ENCODE measurements at regions of chr3 and their contacts with region 1.

Region 1: GRCh38 chr3:149969940-149970715 is 567 bp downstream of the PFN2 start:
- DNase-seq: peak; percentile 86
- ATAC-seq: peak; percentile 65
- H3K4me3 Mint-ChIP-seq: peak overlapping the region; percentile 83
- H3K27ac Mint-ChIP-seq: peak overlapping the region; percentile 51
- H3K4me1 Mint-ChIP-seq: peaks cover 14% of the 10 kb centered on the region
- H3K27me3 Mint-ChIP-seq: peaks cover 25% of the 10 kb centered on the region

Region 2: GRCh38 chr3:149596136-149596770 is 373.9 kb before region 1 on chr3:
- CTCF ChIA-PET with region 1: no interaction called
- POLR2A ChIA-PET with region 1: no interaction called
- intact Hi-C with region 1: no loop called
- DNase-seq: no peak
- ATAC-seq: no peak
- H3K4me3 Mint-ChIP-seq: no peak overlapping the region
- H3K27ac Mint-ChIP-seq: no peak overlapping the region
- H3K4me1 Mint-ChIP-seq: no peaks in the 10 kb centered on the region
- H3K27me3 Mint-ChIP-seq: peaks cover 4% of the 10 kb centered on the region

Region 3: GRCh38 chr3:149812606-149813366 is 157.3 kb before region 1 on chr3 and contains the start of gene RNF13:
- CTCF ChIA-PET with region 1: interaction called, 3 read pairs
- POLR2A ChIA-PET with region 1: no interaction called
- intact Hi-C with region 1: loop called in 1 of 2 experiments (anchors 2 kb)
- DNase-seq: peak; percentile 96
- ATAC-seq: peak; percentile 95
- H3K4me3 Mint-ChIP-seq: peak within 1 kb of the TSS; percentile 95
- H3K27ac Mint-ChIP-seq: peak within 1 kb of the TSS; percentile 100
- H3K4me1 Mint-ChIP-seq: peaks cover 46% of the 10 kb centered on the region
- H3K27me3 Mint-ChIP-seq: peaks cover 3% of the 10 kb centered on the region
- total RNA-seq, gene RNF13: 28.8 to 41.2 TPM

Region 4: DNA sequence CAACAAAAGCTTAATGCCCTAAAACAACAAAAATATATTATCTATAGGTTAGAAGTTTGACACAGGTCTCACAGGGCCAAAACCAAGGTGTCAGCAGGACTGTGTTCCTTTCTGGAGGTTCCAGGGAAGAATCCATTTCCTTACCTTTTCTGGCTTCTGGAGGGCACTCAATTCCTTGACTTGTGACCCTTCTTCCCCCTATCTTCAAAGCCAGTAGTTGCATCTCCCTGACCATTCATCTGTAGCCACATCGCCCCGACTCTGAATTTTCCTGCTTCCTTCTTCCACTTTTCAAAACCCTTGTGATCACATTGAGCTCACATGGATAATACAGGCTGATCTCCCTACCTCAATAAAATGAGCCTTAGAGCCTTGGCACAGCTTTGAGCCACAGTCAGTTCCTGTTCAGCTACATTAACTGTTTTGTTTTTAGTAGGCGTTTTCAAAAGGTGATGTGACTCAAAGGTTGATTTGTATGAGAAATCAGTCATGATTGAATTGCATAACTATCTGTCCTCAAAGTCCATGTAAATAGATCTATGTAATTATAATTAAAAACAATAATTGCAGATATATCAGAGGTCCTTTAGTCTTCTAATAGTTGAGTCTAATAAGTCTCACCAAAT is 11.8 kb before region 1 on chr3:
- CTCF ChIA-PET with region 1: interaction called, 21 read pairs
- POLR2A ChIA-PET with region 1: no interaction called
- intact Hi-C with region 1: no loop called
- DNase-seq: no peak
- ATAC-seq: peak; percentile 78
- H3K4me3 Mint-ChIP-seq: no peak overlapping the region
- H3K27ac Mint-ChIP-seq: no peak overlapping the region
- H3K4me1 Mint-ChIP-seq: peaks cover 21% of the 10 kb centered on the region
- H3K27me3 Mint-ChIP-seq: no peaks in the 10 kb centered on the region

Region 5: GRCh38 chr3:150183678-150184425 is 213.7 kb after region 1 on chr3:
- CTCF ChIA-PET with region 1: interaction called, 52 read pairs
- POLR2A ChIA-PET with region 1: no interaction called
- intact Hi-C with region 1: loop called (anchors 1 kb)
- DNase-seq: peak; percentile 71
- ATAC-seq: peak; percentile 95
- H3K4me3 Mint-ChIP-seq: no peak overlapping the region
- H3K27ac Mint-ChIP-seq: no peak overlapping the region
- H3K4me1 Mint-ChIP-seq: no peaks in the 10 kb centered on the region
- H3K27me3 Mint-ChIP-seq: peaks cover 26% of the 10 kb centered on the region

Region 6: DNA sequence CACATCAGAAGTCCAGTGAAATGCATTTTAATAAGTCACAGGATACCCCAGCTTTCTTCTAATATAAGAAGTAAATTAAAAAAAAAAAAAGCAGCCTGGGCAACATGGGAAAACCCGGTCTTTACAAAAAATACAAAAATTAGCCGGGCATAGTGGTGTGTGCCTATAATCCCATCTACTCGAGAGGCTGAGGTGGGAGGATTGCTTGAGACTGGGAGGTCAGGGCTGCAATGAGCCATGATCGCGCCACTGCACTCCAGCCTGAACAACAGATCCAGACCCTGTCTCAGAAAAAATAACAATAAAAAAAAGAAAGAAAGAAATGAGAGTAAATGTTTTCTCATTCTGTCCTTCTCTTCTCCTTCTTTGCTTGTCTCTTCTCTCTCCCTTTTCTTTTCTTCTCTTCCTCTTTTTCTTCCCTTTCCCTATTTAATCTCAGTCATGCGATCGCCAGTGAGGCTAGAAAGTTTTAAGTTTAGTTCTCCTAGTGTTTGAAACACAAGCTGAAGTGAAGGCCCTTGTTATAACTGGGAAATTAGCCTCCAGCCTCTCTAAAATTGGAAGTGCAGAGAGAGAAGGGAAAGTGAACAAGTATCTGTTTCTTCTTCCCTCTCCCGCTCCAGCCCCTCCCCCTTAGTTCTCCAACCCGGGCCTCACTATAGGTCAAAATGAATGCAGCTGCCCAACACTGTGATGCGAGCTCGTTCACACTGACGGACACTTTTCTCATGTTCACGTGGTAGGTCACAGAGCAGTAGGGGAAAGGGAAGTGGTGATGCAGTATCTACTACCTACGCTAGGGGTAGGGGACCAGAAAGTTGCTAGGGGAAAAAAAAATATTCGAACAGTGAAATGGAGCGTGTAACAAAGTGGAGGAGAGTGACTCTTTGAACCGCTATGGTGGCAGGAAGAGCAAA is 414.4 kb after region 1 on chr3:
- CTCF ChIA-PET with region 1: no interaction called
- POLR2A ChIA-PET with region 1: no interaction called
- intact Hi-C with region 1: loop called in 1 of 2 experiments (anchors 5 kb)
- DNase-seq: peak; percentile 72
- ATAC-seq: peak; percentile 96
- H3K4me3 Mint-ChIP-seq: peak overlapping the region; percentile 46
- H3K27ac Mint-ChIP-seq: peak overlapping the region; percentile 91
- H3K4me1 Mint-ChIP-seq: peaks cover 28% of the 10 kb centered on the region
- H3K27me3 Mint-ChIP-seq: no peaks in the 10 kb centered on the region

Region 7: DNA sequence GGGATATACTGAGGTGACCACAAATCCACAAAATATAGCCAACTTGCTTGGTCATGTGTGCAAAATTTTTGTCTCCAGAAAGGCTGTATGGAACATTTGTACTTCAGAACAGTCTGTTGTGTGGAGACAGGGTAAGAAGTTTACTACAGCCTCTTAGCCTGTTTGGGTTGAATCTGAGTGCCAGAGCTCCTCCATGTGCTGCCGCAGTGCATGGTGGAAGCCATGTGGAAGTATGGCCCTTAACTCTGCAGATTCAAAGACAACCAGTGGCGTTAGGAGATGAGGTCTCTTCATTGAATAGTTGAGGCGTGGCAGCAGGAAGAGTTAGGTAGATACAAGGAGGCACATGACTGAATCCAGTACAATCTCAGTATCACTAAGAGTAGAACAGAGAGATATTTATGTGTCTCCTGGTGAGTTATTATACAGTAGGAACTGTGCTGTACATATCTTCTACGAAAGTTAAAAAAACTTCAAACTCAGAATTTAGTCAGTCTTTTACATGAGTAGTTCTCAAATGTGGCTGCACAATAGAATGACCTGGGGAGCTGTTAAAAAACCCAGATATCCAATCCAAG is 585.8 kb after region 1 on chr3:
- CTCF ChIA-PET with region 1: no interaction called
- POLR2A ChIA-PET with region 1: no interaction called
- intact Hi-C with region 1: no loop called
- DNase-seq: no peak
- ATAC-seq: peak; percentile 30
- H3K4me3 Mint-ChIP-seq: no peak overlapping the region
- H3K27ac Mint-ChIP-seq: no peak overlapping the region
- H3K4me1 Mint-ChIP-seq: peaks cover 27% of the 10 kb centered on the region
- H3K27me3 Mint-ChIP-seq: no peaks in the 10 kb centered on the region

Measured in activated CD4-positive, alpha-beta T cell treated with anti-CD3 and anti-CD28 coated beads for 36 hours (primary cell).